Natural killer cell (primary cell): ENCODE measurements at regions of chr17 and their contacts with region 1.

Region 1: DNA sequence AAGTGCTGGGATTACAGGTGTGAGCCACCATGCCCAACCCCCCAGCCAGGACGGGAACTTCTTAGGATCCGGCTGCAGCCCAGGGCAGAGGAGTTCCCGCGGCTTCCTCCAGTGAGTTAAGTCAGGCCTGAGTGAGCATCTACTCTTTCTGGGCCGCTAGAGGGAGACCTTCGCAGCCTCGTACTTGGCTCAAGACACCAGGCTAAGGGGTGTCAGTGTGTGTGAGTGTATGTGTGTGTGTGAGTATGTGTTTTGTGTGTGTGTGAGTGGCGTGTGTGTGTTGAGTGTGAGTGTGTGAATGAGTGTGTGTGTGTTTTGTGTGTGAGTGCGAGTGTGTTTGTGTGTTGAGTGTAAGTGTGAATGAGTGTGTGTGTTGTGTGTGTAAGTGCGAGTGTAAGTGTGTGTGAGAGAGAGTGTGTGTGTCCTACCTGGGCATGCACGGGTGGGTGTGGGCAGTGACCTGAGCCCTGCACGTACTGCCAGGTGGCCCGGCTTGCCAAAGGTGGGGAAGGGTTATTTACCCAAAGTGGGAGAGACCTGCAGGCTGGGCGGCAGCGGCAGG is 58.5 kb downstream of the TMEM235 start:
- DNase-seq: peak; percentile 46 to 92
- ATAC-seq: peak; percentile 86 to 99 (median 98)
- H3K4me3 ChIP-seq: no peak overlapping the region
- H3K4me3 Mint-ChIP-seq: no peak overlapping the region
- H3K27ac ChIP-seq: no peak overlapping the region
- H3K27ac Mint-ChIP-seq: no peak overlapping the region
- H3K4me1 ChIP-seq: peaks cover 7% of the 10 kb centered on the region
- H3K4me1 Mint-ChIP-seq: no peaks in the 10 kb centered on the region
- H3K27me3 ChIP-seq: no peaks in the 10 kb centered on the region
- H3K27me3 Mint-ChIP-seq: no peaks in the 10 kb centered on the region
- CTCF ChIP-seq: peak; percentile 61

Region 2: DNA sequence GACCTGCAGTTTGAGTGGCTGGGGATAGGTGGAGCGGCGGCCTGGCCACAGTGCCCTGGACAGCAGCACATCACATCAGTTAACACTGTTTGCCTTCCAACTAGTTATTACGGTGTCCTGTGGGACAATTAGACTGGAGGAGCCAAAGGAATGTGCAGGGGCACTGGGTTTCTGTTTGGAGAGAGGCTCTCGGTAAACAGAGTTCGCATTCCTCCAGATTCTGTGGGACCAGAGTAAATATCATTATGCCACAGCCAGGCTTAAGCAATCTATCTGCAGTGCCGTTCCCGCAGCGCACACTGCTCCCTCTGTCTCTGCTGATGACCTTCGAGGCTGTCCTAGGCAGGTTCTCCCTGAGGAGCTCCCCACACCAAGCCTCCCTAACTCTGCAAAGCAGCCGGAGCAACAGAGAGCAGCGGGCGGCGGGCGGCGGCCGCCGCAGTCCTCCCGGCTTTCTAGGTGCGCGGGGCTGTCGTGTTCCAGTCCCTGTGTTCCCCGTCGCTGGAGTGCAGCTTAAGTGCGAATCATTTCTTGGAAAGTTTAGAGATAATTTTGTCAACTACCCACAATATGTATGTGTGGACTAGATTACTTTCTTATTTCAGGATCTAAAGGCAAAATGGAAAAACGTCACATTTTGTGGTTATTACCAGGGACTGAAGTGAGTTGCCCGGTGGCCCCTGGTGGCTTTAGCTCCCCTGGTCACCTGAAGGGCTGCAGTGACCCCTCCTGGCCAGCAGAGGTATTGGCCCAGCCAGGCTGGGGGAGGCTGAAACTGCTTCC is 131.8 kb after region 1 on chr17:
- intact Hi-C with region 1: loop called (anchors 1 kb)
- DNase-seq: peak; percentile 68 to 84
- ATAC-seq: peak; percentile 89 to 97 (median 96)
- H3K4me3 ChIP-seq: no peak overlapping the region
- H3K4me3 Mint-ChIP-seq: no peak overlapping the region
- H3K27ac ChIP-seq: no peak overlapping the region
- H3K27ac Mint-ChIP-seq: no peak overlapping the region
- H3K4me1 ChIP-seq: peaks cover 11% of the 10 kb centered on the region
- H3K4me1 Mint-ChIP-seq: peaks cover 10 to 15% of the 10 kb centered on the region in 2 donors
- H3K27me3 ChIP-seq: no peaks in the 10 kb centered on the region
- H3K27me3 Mint-ChIP-seq: no peaks in the 10 kb centered on the region
- CTCF ChIP-seq: peak; percentile 96